ENCODE measurements at regions of chr14 and their contacts with region 1.

Region 1: DNA sequence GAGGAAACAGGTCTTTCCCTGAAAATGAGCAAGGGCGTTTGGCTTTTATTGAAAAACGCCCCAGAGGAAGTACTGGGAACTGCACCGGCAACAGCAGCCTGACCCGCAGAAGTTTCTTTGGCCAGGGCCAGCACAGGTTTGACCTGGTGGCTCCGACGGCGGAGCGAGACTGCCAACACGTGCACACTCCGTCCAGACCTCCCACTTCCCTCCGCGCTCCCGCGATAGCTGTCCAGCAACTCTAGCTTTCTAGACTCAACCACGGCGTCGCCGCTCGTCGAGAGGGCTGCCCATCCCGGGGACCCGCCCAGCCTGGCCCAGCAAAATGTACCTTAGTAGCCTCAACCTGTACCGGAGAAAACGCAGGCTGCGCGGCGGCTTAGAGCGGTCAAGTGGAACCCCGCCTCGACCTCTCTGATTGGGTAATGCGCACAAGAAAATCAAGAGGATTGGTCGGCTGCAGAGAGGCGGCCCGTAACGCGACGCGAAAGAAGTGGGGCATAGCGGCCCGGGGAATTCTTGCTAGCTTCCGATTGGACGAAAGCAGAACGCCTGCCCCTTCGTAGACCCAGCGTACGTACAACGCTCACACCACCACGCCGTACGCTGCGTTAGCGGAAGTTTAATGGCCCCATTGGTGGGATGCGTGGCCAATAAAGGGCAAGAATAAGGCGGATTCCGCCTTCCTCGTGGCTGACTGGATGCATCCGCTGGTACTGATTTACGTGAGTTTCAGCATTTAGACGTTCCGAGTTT is at the start of gene WDR89:
- DNase-seq: peak; percentile 98
- H3K4me3 Mint-ChIP-seq: peak within 1 kb of the TSS; percentile 74
- H3K27ac Mint-ChIP-seq: peak within 1 kb of the TSS; percentile 89
- H3K4me1 Mint-ChIP-seq: peaks cover 43% of the 10 kb centered on the region
- H3K27me3 Mint-ChIP-seq: no peaks in the 10 kb centered on the region
- total RNA-seq, gene WDR89: 27.3 to 30.4 TPM

Region 2: GRCh38 chr14:63388763-63389431 is 252.8 kb before region 1 on chr14:
- CTCF ChIA-PET with region 1: interaction called, 11 read pairs
- POLR2A ChIA-PET with region 1: no interaction called
- intact Hi-C with region 1: loop called (anchors 10 kb)
- DNase-seq: peak; percentile 76
- H3K4me3 Mint-ChIP-seq: no peak overlapping the region
- H3K27ac Mint-ChIP-seq: no peak overlapping the region
- H3K4me1 Mint-ChIP-seq: peaks cover under 1% of the 10 kb centered on the region
- H3K27me3 Mint-ChIP-seq: no peaks in the 10 kb centered on the region

Region 3: DNA sequence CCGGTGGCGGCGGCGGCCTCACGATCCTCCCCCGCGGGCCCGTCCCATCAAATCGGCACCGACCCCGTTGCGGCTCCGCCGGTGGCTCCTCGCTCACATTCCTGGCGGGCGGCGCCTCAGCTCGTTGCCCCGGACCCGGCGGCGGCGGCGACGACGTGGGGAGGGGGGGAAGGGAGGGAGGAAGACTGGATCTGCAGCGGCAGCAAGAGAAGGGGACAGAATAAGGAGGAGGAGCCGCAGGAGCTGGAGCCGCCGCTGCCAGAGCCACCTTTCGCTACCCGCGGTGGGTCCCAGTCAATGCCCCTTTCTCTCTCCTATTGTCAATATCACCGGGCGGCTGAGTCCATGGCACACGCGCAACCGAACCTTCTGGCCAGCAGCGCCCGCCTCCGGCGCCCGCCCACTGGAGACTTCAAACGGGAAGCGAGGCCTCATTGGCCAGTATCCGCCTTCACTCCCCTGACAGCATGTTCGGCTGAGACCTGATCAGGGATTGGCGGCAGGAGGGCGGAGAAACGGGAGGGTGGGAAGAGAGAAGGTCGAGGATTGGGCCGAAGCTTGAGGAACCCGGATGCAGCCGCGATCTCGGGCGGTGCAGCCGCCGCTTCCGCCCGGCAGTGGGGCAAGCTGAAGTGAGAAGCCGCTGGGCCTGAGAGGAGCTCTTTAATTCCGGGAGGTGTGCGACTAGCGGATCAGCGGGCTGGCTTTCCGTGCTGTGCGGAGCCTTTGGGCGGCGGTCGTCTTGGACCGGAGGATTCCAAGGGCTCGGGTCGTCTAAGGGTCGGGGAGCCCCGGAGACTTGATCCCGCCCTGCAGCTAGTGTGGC is 98.4 kb before region 1 on chr14 and contains the start of gene PPP2R5E:
- CTCF ChIA-PET with region 1: interaction called, 3 read pairs
- POLR2A ChIA-PET with region 1: interaction called, 12 read pairs
- intact Hi-C with region 1: loop called (anchors 1 kb)
- DNase-seq: peak; percentile 99
- H3K4me3 Mint-ChIP-seq: peak within 1 kb of the TSS; percentile 82
- H3K27ac Mint-ChIP-seq: peak within 1 kb of the TSS; percentile 86
- H3K4me1 Mint-ChIP-seq: peaks cover 31% of the 10 kb centered on the region
- H3K27me3 Mint-ChIP-seq: no peaks in the 10 kb centered on the region
- total RNA-seq, gene PPP2R5E: 37.7 to 37.8 TPM

Region 4: GRCh38 chr14:63686951-63687350 is 45.3 kb after region 1 on chr14:
- CTCF ChIA-PET with region 1: no interaction called
- POLR2A ChIA-PET with region 1: no interaction called
- intact Hi-C with region 1: no loop called
- DNase-seq: no peak
- H3K4me3 Mint-ChIP-seq: no peak overlapping the region
- H3K27ac Mint-ChIP-seq: no peak overlapping the region
- H3K4me1 Mint-ChIP-seq: no peaks in the 10 kb centered on the region
- H3K27me3 Mint-ChIP-seq: no peaks in the 10 kb centered on the region

Region 5: DNA sequence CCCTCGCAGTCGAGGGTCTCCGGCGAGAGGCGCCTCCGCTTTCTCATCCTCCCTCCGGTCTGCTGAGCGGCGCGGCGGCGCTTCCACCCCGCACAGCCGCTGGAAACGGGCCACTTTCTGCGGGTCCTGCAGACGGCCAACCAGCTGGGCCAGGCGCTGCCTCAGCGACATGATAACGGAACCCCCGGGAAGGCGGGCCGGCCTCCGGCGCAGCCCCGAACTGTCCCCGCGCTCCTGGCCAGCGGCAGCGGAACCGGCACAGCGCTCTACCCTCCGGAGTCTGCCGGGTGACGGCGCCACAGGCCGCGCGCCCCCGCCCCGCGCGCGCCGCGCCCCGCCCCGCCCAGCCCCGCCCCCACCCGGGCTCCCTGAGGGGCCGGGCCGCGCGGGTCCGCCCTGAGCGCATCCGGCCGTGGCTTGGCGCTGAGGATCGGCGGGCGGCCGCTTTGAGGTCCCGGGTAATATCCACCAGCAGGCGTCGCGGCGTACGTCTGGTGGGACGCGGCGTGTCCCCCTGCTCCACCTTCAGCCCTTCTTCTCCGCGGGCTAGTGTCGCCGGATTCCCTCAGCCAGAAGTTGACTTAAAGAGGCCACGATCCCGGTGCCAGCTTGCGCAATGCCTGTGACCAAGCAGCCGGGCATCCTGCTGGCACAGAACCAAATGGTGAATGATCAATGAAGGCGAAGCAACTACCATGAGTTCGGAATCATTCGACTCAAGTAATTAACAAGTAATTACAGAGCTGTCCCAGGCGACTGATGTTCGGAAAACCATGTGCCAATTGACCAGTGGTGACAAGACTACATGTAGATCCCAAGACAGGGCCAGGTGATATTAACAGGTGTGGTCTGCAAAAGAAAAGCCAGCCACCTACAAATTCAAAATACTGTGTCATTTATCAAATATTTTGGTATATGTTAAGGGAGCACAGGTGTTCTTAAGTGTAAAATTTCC is 86.4 kb after region 1 on chr14 and contains the start of gene SGPP1:
- CTCF ChIA-PET with region 1: interaction called, 4 read pairs
- POLR2A ChIA-PET with region 1: interaction called, 9 read pairs
- intact Hi-C with region 1: loop called (anchors 1 kb)
- DNase-seq: peak; percentile 86
- H3K4me3 Mint-ChIP-seq: peak within 1 kb of the TSS; percentile 98
- H3K27ac Mint-ChIP-seq: peak within 1 kb of the TSS; percentile 86
- H3K4me1 Mint-ChIP-seq: peaks cover 25% of the 10 kb centered on the region
- H3K27me3 Mint-ChIP-seq: no peaks in the 10 kb centered on the region
- total RNA-seq, gene SGPP1: 10.5 to 11.3 TPM

Region 6: DNA sequence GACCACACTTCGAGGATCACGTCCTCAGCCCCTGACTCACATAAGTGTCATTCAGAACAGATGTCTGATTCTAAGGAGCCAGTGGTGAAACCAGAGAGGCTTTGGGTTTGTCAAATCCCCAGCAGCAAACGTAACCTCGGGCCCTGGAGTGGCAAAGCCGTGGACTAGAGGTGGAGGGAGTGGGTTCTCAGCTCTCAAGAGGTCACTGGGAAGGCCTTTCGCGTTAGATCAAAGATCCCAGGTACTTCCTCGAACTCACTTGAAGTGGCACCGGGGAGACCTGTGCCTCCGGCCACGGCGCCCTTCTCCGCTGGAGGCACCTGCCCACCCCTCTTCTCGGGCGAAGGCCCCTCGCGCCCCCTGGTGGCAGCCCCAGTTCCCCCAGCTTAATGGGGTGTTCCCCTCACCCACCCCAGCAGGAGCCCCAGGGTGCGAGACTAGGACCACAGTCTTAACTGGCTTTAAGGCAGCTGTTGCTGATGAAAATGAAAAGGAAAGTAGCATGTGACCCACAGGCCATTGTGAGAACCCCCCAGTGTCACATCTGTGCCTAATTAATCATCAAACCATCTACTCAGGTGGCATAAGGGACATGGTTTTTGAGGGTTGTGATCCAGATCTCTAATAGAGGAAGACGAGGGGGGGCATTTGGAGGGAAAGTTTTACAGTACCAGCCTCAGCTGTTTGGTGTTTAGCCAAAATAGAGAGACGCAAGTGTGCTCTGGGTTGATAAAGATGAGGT is 653.2 kb after region 1 on chr14:
- CTCF ChIA-PET with region 1: interaction called, 3 read pairs
- POLR2A ChIA-PET with region 1: no interaction called
- intact Hi-C with region 1: loop called (anchors 5 kb)
- DNase-seq: peak; percentile 91
- H3K4me3 Mint-ChIP-seq: peak overlapping the region; percentile 70
- H3K27ac Mint-ChIP-seq: no peak overlapping the region
- H3K4me1 Mint-ChIP-seq: peaks cover 29% of the 10 kb centered on the region
- H3K27me3 Mint-ChIP-seq: peaks cover 14% of the 10 kb centered on the region

Region 7: DNA sequence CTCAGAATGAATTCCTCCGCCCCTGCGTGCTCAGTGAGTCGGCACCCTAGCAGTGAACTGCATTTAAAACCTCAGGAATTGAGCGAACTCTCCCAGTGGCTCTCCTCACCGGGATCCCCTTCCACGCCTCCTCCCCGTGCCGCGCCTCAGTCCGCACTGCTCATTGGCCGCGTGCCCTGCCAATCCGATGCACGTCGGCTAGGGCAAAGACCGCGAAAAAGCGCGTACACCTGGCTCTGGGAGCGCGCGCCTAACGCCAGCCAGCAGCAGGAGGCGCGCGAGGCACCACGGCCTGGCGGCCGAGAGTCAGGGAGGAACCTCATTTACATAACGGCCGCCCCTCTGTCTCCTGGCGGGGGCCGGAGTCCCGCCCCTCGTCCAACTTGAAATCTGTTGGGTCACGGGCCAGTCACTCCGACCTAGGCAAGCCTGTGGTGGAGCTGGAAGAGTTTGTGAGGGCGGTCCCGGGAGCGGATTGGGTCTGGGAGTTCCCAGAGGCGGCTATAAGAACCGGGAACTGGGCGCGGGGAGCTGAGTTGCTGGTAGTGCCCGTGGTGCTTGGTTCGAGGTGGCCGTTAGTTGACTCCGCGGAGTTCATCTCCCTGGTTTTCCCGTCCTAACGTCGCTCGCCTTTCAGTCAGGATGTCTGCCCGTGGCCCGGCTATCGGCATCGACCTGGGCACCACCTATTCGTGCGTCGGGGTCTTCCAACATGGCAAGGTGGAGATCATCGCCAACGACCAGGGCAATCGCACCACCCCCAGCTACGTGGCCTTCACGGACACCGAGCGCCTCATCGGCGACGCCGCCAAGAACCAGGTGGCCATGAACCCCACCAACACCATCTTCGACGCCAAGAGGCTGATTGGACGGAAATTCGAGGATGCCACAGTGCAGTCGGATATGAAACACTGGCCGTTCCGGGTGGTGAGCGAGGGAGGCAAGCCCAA is 898.8 kb after region 1 on chr14 and contains the start of gene HSPA2:
- CTCF ChIA-PET with region 1: no interaction called
- POLR2A ChIA-PET with region 1: no interaction called
- intact Hi-C with region 1: loop called (anchors 5 kb)
- DNase-seq: peak; percentile 98
- H3K4me3 Mint-ChIP-seq: peak within 1 kb of the TSS; percentile 89
- H3K27ac Mint-ChIP-seq: peak within 1 kb of the TSS; percentile 84
- H3K4me1 Mint-ChIP-seq: peaks cover 35% of the 10 kb centered on the region
- H3K27me3 Mint-ChIP-seq: peaks cover 24% of the 10 kb centered on the region
- total RNA-seq, gene HSPA2: 6.6 to 6.7 TPM